Panc1 (cell line): ENCODE measurements at regions of chr19 and their contacts with region 1.

Region 1: GRCh38 chr19:38693380-38694223 is 46.2 kb downstream of the ACTN4 start:
- DNase-seq: peak; percentile 90
- ATAC-seq: peak; percentile 54
- H3K4me3 ChIP-seq: peak overlapping the region in 1 of 2 experiments; percentile 19; a peak in 2 of 4 replicates
- H3K27ac ChIP-seq: peak overlapping the region; percentile 98
- H3K4me1 ChIP-seq: peaks cover 100% of the 10 kb centered on the region
- H3K27me3 ChIP-seq: no peaks in the 10 kb centered on the region
- CTCF ChIP-seq: no peak

Region 2: DNA sequence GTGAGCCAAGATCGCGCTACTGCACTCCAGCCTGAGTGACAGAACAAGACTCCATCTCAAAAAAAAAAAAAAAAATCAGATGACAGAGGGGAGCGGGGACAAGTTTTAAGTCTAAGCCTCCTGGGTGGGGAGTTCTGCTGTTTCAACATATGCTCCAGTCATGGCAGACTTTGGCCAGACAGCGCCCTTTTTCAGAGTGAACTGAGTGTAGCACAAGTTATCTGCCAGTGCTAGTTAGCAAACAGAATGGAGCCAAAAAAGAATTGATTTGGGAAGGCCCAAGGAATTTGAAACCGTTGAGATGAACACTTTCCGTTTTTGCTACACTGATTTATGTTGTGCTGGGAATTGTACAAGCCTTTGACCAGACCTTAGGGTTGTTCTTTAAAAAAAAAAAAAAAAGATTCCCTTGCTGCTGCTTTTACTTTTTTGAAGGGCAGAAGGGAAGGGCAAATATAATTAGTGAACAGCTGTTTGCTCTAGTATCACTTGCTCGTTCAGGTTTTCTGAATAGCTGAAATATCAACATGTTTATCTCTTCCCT is 40.5 kb before region 1 on chr19:
- CTCF ChIA-PET with region 1: no interaction called
- POLR2A ChIA-PET with region 1: interaction called, 10 read pairs
- in situ Hi-C with region 1: no loop called
- intact Hi-C with region 1: loop called (anchors 5 kb)
- DNase-seq: no peak
- ATAC-seq: no peak
- H3K4me3 ChIP-seq: peak overlapping the region; percentile 50 to 68
- H3K27ac ChIP-seq: peak overlapping the region; percentile 96
- H3K4me1 ChIP-seq: peaks cover 73% of the 10 kb centered on the region
- H3K27me3 ChIP-seq: no peaks in the 10 kb centered on the region
- CTCF ChIP-seq: no peak

Region 3: GRCh38 chr19:38658462-38659306 is 34.9 kb before region 1 on chr19:
- CTCF ChIA-PET with region 1: no interaction called
- POLR2A ChIA-PET with region 1: interaction called, 12 read pairs
- in situ Hi-C with region 1: no loop called
- intact Hi-C with region 1: loop called (anchors 5 kb)
- DNase-seq: peak; percentile 100
- ATAC-seq: peak; percentile 59
- H3K4me3 ChIP-seq: peak overlapping the region; percentile 2 to 31; a peak in 3 of 4 replicates
- H3K27ac ChIP-seq: peak overlapping the region; percentile 96
- H3K4me1 ChIP-seq: peaks cover 100% of the 10 kb centered on the region
- H3K27me3 ChIP-seq: no peaks in the 10 kb centered on the region
- CTCF ChIP-seq: no peak

Region 4: DNA sequence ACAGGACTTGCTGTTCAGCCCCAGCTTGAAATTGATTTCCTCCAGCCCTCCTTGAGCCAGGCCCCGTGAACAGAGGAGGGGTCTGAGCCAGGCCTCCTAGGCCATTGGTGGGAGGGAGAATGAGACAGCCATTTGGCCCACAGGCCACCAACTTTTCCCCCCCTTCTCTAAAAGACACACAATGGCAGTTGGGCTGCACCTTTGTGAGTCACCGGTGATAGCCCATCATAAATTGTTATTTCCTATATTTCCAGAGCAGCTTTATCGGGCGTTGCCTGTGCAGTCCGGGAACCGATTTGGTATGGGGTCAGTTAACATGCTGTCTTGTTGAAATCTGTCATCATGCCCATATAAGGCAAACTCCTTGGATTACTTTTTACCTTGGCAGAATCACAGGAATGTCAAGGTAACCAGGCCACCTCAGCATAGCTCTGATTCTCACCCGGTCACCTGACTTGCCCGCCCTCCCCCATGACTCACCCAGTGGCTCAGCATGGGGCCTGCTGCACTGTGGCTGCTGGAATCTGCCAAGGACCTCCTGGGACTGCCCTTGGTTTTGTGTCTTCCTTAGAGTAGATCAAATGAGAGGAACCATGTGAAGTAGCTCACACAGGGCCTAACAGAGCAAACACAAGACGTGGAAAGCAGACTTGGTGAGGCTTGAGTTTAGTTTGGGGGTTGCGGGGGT is 10.1 kb before region 1 on chr19:
- CTCF ChIA-PET with region 1: no interaction called
- POLR2A ChIA-PET with region 1: interaction called, 13 read pairs
- in situ Hi-C with region 1: no loop called
- intact Hi-C with region 1: no loop called
- DNase-seq: peak; percentile 100
- ATAC-seq: peak; percentile 87
- H3K4me3 ChIP-seq: peak overlapping the region in 1 of 2 experiments; percentile 10; a peak in 2 of 4 replicates
- H3K27ac ChIP-seq: peak overlapping the region; percentile 98
- H3K4me1 ChIP-seq: peaks cover 100% of the 10 kb centered on the region
- H3K27me3 ChIP-seq: no peaks in the 10 kb centered on the region
- CTCF ChIP-seq: no peak

Region 5: GRCh38 chr19:38784224-38784623 is 90.6 kb after region 1 on chr19:
- CTCF ChIA-PET with region 1: no interaction called
- POLR2A ChIA-PET with region 1: interaction called, 20 read pairs
- in situ Hi-C with region 1: no loop called
- intact Hi-C with region 1: no loop called
- DNase-seq: no peak
- ATAC-seq: no peak
- H3K4me3 ChIP-seq: no peak overlapping the region
- H3K27ac ChIP-seq: no peak overlapping the region
- H3K4me1 ChIP-seq: peaks cover 9% of the 10 kb centered on the region
- H3K27me3 ChIP-seq: no peaks in the 10 kb centered on the region
- CTCF ChIP-seq: no peak

Region 6: GRCh38 chr19:38917516-38918491 is 224.2 kb after region 1 on chr19:
- CTCF ChIA-PET with region 1: no interaction called
- POLR2A ChIA-PET with region 1: interaction called, 11 read pairs
- in situ Hi-C with region 1: no loop called
- intact Hi-C with region 1: no loop called
- DNase-seq: no peak
- ATAC-seq: peak; percentile 78
- H3K4me3 ChIP-seq: no peak overlapping the region
- H3K27ac ChIP-seq: peak overlapping the region; percentile 0; the same call in 1 of the 2 replicates
- H3K4me1 ChIP-seq: peaks cover 11% of the 10 kb centered on the region
- H3K27me3 ChIP-seq: no peaks in the 10 kb centered on the region
- CTCF ChIP-seq: no peak

Region 7: DNA sequence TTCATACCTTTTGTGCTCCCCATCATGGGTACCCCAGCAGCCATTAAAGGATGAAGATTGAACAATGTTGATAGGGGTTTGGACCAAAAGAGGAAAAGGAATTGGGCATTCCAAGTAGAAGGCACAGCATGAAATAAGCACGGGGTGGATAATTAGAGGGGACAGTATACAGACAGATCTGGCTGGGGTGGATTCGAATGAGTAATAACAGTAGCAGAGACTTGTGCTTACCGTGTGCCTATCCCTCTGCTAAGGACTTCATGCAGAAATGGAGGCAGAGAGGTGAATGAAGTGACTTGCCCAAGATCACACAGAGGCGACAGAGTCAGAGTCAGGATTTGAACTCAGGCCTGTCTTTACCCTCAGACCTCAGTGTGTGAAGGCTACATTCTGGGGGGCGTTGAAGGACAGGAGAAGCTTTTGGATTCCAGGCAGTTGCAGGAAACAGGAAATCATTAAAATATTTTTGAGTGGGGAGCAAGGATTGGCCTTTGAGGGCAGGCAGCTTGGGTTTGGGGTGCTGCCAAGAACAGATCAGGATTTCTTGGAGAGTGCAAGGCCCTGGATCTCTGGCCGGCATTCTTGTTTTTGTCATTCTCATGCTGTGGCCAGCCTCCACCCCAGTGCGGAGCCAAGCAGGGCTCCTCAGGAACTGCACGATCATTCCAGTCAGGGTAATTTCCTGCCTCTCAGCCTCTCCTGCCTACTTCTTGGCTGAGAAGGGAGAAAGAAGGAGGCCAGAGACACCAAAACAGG is 678.6 kb after region 1 on chr19:
- CTCF ChIA-PET with region 1: no interaction called
- POLR2A ChIA-PET with region 1: no interaction called
- in situ Hi-C with region 1: no loop called
- intact Hi-C with region 1: no loop called
- DNase-seq: no peak
- ATAC-seq: peak; percentile 2
- H3K4me3 ChIP-seq: no peak overlapping the region
- H3K27ac ChIP-seq: no peak overlapping the region
- H3K4me1 ChIP-seq: no peaks in the 10 kb centered on the region
- H3K27me3 ChIP-seq: no peaks in the 10 kb centered on the region
- CTCF ChIP-seq: no peak